ENCODE measurements at regions of chr15 and their contacts with region 1.

Region 1: GRCh38 chr15:43029476-43029875 is 76.4 kb downstream of the UBR1 start:
- DNase-seq: no peak
- H3K4me3 ChIP-seq: no peak overlapping the region
- H3K27ac ChIP-seq: no peak overlapping the region
- H3K4me1 ChIP-seq: no peaks in the 10 kb centered on the region
- H3K27me3 ChIP-seq: no peaks in the 10 kb centered on the region
- CTCF ChIP-seq: no peak

Region 2: GRCh38 chr15:42911107-42911506 is 118.4 kb before region 1 on chr15:
- CTCF ChIA-PET with region 1: no interaction called
- dilution Hi-C with region 1: no loop called
- in situ Hi-C with region 1: no loop called
- intact Hi-C with region 1: no loop called
- DNase-seq: no peak
- H3K4me3 ChIP-seq: no peak overlapping the region
- H3K27ac ChIP-seq: no peak overlapping the region
- H3K4me1 ChIP-seq: peaks cover 13% of the 10 kb centered on the region
- H3K27me3 ChIP-seq: no peaks in the 10 kb centered on the region
- CTCF ChIP-seq: no peak

Region 3: DNA sequence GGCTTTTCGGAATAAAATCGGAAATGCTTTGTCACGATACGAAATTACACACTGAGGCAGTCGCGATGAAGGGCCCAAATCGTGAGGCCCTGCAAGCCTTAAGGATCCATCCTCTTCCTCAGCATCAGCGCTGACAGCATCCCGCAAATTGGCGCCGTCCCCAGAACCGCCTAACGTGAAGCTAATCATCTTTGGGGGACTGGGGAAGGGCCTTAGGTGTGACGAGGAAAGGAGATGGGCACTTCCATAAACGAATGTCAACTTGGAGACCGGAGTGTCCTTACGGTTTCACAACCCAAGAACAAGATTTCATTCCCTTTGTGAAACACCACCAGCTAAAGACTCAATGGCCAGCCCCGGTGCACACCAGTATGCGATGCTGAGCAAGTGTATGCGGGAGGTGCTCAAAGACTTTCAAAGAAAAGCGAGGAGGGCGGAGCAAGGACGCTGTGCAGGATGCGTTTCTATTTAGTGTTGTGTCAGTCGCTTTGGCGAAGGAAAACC is 108.2 kb before region 1 on chr15:
- CTCF ChIA-PET with region 1: no interaction called
- dilution Hi-C with region 1: no loop called
- in situ Hi-C with region 1: no loop called
- intact Hi-C with region 1: no loop called
- DNase-seq: peak; percentile 31
- H3K4me3 ChIP-seq: peak overlapping the region; percentile 18 to 53 (median 44)
- H3K27ac ChIP-seq: no peak overlapping the region
- H3K4me1 ChIP-seq: peaks cover 13% of the 10 kb centered on the region
- H3K27me3 ChIP-seq: no peaks in the 10 kb centered on the region
- CTCF ChIP-seq: no peak

Region 4: GRCh38 chr15:42939841-42940240 is 89.6 kb before region 1 on chr15:
- CTCF ChIA-PET with region 1: no interaction called
- dilution Hi-C with region 1: loop called (anchors 5 kb)
- in situ Hi-C with region 1: no loop called
- intact Hi-C with region 1: no loop called
- DNase-seq: no peak
- H3K4me3 ChIP-seq: no peak overlapping the region
- H3K27ac ChIP-seq: no peak overlapping the region
- H3K4me1 ChIP-seq: peaks cover 9% of the 10 kb centered on the region
- H3K27me3 ChIP-seq: no peaks in the 10 kb centered on the region
- CTCF ChIP-seq: no peak

Region 5: DNA sequence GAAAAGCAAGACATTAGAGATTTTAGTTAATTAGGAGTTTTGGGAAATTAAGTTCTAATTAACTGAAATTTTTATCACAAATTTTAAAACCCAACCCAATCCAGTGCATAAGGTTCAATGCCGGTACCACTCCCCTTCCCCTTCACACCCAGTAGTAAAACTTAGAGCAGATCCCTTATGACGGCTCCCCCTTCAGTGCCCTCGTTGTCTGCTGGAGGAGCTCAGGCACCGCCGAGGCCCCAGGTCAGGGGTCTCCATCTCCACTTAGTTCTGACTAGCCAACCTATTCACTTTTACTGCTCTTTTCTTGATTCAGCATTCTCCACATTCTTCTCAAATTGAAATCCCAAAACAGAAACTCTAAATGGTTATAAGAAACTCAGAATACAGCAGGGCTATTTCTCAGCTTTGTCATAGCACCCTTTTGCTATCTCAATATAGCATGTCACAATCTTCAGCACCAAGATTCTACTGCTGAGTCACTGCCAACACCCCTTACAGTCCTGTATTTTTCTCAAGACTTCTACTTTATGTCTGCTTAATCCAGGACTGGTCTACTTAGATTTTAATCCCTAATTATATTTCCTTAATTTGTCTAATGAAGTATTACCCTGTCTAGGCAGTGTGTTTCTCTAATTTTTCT is 381.2 kb after region 1 on chr15:
- CTCF ChIA-PET with region 1: no interaction called
- dilution Hi-C with region 1: no loop called
- in situ Hi-C with region 1: no loop called
- intact Hi-C with region 1: no loop called
- DNase-seq: peak; percentile 24
- H3K4me3 ChIP-seq: no peak overlapping the region
- H3K27ac ChIP-seq: no peak overlapping the region
- H3K4me1 ChIP-seq: no peaks in the 10 kb centered on the region
- H3K27me3 ChIP-seq: no peaks in the 10 kb centered on the region
- CTCF ChIP-seq: no peak

Region 6: DNA sequence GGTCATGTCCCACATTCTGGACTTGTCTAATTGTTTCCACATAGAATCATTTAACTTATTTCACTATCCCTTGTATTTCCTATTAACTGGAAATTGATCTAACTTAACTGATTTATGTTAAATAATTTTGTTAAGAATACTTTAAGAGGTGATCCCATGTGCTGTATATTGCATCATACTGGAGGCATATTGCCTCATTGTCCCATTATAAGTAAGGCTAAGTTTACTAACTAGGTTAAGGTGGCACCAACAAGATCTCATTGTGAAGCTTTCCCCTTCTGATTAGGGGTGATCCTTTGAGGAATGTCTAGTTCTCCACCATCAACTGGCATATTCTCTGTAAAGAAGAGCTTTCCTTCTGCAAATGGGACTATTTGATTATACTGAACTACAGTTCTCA is 512.3 kb after region 1 on chr15:
- CTCF ChIA-PET with region 1: no interaction called
- dilution Hi-C with region 1: no loop called
- in situ Hi-C with region 1: no loop called
- intact Hi-C with region 1: no loop called
- DNase-seq: no peak
- H3K4me3 ChIP-seq: no peak overlapping the region
- H3K27ac ChIP-seq: no peak overlapping the region
- H3K4me1 ChIP-seq: no peaks in the 10 kb centered on the region
- H3K27me3 ChIP-seq: no peaks in the 10 kb centered on the region
- CTCF ChIP-seq: no peak

Measured in mammary epithelial cell (primary cell).